ENCODE measurements at regions of chr12 and their contacts with region 1.

Region 1: DNA sequence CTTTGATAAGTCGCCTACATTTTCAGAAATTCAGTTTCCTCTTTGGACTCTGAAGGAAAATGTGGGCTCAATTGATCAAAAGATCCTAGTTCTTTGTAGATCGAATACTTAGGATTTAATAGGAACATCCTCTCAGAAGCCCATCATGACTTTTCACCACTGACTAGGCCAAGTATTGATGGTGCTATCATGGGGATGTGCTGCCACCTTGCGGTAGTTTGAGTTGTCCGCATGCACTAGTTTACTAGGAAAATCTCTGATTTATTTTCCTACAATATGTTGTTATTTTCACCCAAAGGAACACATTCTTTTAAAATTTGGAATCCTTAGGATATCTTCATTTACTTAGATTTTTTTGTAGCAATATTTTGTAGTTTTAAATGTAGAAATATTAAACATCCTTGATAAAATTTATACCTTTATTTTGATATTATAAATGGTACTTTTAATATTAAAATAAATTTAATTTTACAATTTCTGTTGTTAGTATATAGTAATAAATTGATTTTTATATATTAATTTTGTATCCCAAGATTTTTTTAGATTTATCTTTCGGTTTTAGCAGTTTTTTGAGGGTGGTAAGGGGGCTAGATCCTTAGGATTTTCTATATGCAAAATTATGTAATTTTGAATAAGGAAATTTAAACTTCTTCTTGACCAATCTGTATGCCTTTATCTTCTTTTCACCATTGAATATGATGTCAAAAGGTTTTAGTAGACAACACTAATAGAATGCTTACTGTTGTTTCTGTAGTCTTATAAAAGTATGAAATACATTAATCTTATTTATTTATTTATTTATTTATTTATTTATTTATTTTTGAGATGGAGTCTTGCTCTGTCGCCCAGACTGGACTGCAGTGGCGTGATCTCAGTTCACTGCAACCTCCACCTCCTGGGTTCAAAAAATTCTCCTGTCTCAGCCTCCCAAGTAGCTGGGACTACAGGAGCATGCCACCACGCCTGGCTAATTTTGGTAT is 52.9 kb upstream of the OR9K2 start:
- DNase-seq: peak; percentile 85 to 92 (median 86)
- H3K4me3 ChIP-seq: no peak overlapping the region
- H3K27ac ChIP-seq: no peak overlapping the region
- H3K4me1 ChIP-seq: peaks cover 0 to 13% (median 5%) of the 10 kb centered on the region in 4 experiments
- H3K27me3 ChIP-seq: no peaks in the 10 kb centered on the region

Region 2: DNA sequence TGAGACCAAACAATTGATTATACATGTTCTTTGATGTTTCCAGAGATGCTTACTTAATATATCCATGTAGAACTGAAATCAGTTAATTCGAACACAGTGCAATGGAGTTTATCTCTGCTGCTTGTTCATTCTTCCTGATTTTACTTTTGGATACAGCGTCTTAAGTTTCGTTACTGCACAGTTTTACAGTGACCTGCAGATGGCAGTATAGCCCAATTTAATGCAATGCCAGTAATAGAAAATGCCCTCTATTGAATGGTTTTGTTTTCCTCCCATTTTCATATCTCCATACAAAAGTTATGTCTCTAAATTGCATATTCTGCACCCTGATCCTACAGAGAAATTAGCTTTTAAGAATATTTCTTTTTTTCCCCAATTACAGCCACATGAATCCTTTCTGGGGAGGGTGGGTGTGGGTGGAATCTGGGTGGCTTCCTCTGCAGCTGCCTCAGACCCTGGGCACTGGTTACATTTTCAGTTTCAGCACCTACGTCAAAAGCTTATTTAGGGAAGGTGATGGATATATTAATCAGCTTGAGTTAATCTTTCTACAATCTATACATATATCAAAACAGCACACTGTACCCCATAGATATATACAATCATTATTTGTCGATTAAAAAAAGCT is 324.0 kb before region 1 on chr12:
- CTCF ChIA-PET with region 1: interaction called, 46 read pairs
- POLR2A ChIA-PET with region 1: no interaction called
- DNase-seq: peak; percentile 72 to 86 (median 80)
- H3K4me3 ChIP-seq: peak overlapping the region in 1 of 7 experiments; percentile 1
- H3K27ac ChIP-seq: no peak overlapping the region
- H3K4me1 ChIP-seq: peaks cover 6 to 12% (median 11%) of the 10 kb centered on the region in 4 experiments
- H3K27me3 ChIP-seq: no peaks in the 10 kb centered on the region

Region 3: GRCh38 chr12:54958048-54958658 is 115.2 kb before region 1 on chr12:
- CTCF ChIA-PET with region 1: interaction called, 40 read pairs
- POLR2A ChIA-PET with region 1: no interaction called
- DNase-seq: peak; percentile 79 to 84 (median 81)
- H3K4me3 ChIP-seq: no peak overlapping the region
- H3K27ac ChIP-seq: peak overlapping the region in 1 of 2 experiments; percentile 64
- H3K4me1 ChIP-seq: peaks cover 23 to 75% (median 37%) of the 10 kb centered on the region in 4 experiments
- H3K27me3 ChIP-seq: no peaks in the 10 kb centered on the region

Region 4: DNA sequence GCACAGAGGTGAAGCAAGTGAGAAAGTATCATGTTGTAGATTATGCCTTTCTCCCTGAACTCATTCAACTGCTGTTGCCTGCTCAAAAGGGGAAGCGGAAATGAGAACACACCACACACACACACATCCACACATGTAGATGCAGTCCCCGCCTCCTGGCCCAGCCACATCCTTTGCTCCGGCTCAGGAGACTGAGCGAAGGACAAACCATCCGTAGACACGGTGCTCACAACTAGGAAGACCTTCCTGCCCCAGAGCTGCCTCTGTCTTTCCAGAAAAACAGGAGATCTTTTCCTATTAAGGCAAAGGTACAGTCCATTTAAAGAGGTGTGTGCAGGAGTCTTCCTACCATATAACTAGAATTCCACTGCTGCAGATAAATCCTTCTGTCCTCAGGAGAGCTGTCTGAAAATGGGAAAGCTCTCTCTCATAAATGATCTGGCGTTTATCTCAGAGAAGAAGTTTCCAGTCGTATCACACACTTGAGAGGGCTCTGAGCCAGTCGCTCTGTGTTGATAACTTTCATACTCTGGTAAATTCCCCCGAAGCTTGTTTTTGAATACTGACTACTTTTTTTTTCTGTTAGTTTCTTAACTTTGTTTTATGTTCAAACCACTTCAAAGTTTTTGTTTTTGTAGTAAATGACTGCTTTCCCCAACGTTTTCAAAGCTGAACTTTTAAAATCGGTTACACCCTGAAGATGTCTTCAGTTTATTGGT is 88.5 kb before region 1 on chr12 and contains the start of gene TESPA1:
- CTCF ChIA-PET with region 1: interaction called, 26 read pairs
- POLR2A ChIA-PET with region 1: interaction called, 4 read pairs
- DNase-seq: peak; percentile 93 to 97 (median 95)
- H3K4me3 ChIP-seq: peak within 1 kb of the TSS; percentile 33 to 88 (median 75)
- H3K27ac ChIP-seq: peak within 1 kb of the TSS; percentile 69 to 79
- H3K4me1 ChIP-seq: peaks cover 58 to 88% (median 65%) of the 10 kb centered on the region in 4 experiments
- H3K27me3 ChIP-seq: no peaks in the 10 kb centered on the region

Region 5: GRCh38 chr12:55034218-55034617 is 39.1 kb before region 1 on chr12:
- CTCF ChIA-PET with region 1: interaction called, 11 read pairs
- POLR2A ChIA-PET with region 1: no interaction called
- DNase-seq: no peak
- H3K4me3 ChIP-seq: no peak overlapping the region
- H3K27ac ChIP-seq: no peak overlapping the region
- H3K4me1 ChIP-seq: peaks cover 6 to 25% (median 13%) of the 10 kb centered on the region in 4 experiments
- H3K27me3 ChIP-seq: no peaks in the 10 kb centered on the region

Region 6: DNA sequence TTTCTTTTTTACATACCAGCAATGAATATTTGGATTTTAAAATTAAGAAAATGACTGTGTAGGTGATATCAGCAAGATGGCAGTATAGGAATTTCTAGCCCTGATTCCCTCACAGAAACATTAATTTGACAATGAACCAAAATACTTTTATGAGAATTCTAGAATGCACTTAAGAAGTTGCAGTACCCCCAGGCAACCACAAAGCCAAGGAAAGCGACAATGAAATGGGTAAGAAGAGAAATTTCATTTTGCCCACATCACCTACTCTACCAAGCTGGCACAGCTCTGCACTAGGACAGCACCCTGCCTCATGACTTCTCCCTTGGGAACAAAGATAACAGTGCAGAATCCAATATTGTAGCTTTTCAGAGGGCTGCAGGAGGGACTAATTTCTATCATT is 59.5 kb after region 1 on chr12:
- CTCF ChIA-PET with region 1: no interaction called
- POLR2A ChIA-PET with region 1: no interaction called
- DNase-seq: no peak
- H3K4me3 ChIP-seq: no peak overlapping the region
- H3K27ac ChIP-seq: no peak overlapping the region
- H3K4me1 ChIP-seq: no peaks in the 10 kb centered on the region
- H3K27me3 ChIP-seq: peaks cover 0 to 16% (median 3%) of the 10 kb centered on the region in 5 experiments

Measured in common myeloid progenitor, CD34-positive (primary cell).